ENCODE measurements at regions of chr5 and their contacts with region 1.

Region 1: GRCh38 chr5:29175774-29176173 is 2017.7 kb upstream of the CDH6 start:
- DNase-seq: no peak
- ATAC-seq: no peak
- H3K4me3 ChIP-seq: no peak overlapping the region
- H3K27ac ChIP-seq: no peak overlapping the region
- H3K4me1 ChIP-seq: no peaks in the 10 kb centered on the region
- H3K27me3 ChIP-seq: no peaks in the 10 kb centered on the region
- CTCF ChIP-seq: no peak
- POLR2A ChIP-seq: no peak
- RAD21 ChIP-seq: no peak

Region 2: GRCh38 chr5:29193972-29194371 is 18.2 kb after region 1 on chr5:
- CTCF ChIA-PET with region 1: no interaction called
- POLR2A ChIA-PET with region 1: no interaction called
- dilution Hi-C with region 1: no loop called
- in situ Hi-C with region 1: no loop called
- intact Hi-C with region 1: loop called (anchors 2 kb)
- DNase-seq: no peak
- ATAC-seq: no peak
- H3K4me3 ChIP-seq: no peak overlapping the region
- H3K27ac ChIP-seq: no peak overlapping the region
- H3K4me1 ChIP-seq: no peaks in the 10 kb centered on the region
- H3K27me3 ChIP-seq: no peaks in the 10 kb centered on the region
- CTCF ChIP-seq: no peak
- POLR2A ChIP-seq: no peak
- RAD21 ChIP-seq: no peak

Measured in IMR-90 (cell line).